ENCODE measurements at regions of chr2 and their contacts with region 1.

Region 1: GRCh38 chr2:241950413-241951315 is 81.1 kb downstream of the RTP5 start:
- H3K4me3 ChIP-seq: no peak overlapping the region
- H3K27ac ChIP-seq: no peak overlapping the region
- H3K4me1 ChIP-seq: no peaks in the 10 kb centered on the region
- CTCF ChIP-seq: peak; percentile 85

Region 2: DNA sequence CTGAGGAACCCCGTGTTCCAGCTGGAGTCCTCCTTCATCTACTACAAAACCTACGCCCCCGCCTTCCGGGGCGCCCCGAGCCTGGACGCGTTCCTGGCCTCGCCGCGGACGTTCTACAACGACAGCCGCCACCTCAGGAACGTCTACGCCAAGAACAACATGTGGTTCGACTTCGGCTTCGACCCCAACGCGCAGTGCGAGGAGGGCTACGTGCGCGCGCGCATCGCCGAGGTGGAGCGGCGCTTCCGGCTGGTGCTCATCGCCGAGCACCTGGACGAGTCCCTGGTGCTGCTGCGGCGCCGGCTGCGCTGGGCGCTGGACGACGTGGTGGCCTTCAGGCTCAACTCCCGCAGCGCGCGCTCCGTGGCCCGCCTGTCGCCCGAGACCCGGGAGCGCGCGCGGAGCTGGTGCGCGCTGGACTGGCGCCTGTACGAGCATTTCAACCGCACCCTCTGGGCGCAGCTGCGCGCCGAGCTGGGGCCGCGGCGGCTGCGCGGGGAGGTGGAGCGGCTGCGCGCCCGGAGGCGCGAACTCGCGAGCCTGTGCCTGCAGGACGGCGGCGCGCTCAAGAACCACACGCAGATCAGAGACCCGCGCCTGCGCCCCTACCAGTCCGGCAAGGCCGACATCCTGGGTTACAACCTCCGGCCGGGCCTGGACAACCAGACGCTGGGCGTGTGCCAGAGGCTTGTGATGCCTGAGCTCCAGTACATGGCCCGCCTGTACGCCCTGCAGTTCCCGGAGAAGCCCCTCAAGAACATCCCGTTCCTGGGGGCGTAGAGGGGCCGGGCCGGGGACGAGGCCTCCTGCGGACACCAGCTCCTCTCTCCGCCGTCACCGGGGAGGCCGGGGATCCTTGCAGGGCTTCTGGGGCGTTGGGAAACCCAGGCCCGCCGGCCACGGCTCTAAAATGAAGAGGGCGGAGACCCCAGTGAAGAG is 147.0 kb before region 1 on chr2:
- CTCF ChIA-PET with region 1: no interaction called
- POLR2A ChIA-PET with region 1: no interaction called
- H3K4me3 ChIP-seq: peak overlapping the region; percentile 6; the same call in 1 of the 2 replicates
- H3K27ac ChIP-seq: no peak overlapping the region
- H3K4me1 ChIP-seq: no peaks in the 10 kb centered on the region
- CTCF ChIP-seq: no peak

Region 3: GRCh38 chr2:241859436-241860183 is 91.1 kb before region 1 on chr2:
- CTCF ChIA-PET with region 1: no interaction called
- POLR2A ChIA-PET with region 1: no interaction called
- H3K4me3 ChIP-seq: no peak overlapping the region
- H3K27ac ChIP-seq: no peak overlapping the region
- H3K4me1 ChIP-seq: no peaks in the 10 kb centered on the region
- CTCF ChIP-seq: no peak

Region 4: GRCh38 chr2:241936457-241937133 is 14.1 kb before region 1 on chr2:
- CTCF ChIA-PET with region 1: interaction called, 19 read pairs
- POLR2A ChIA-PET with region 1: no interaction called
- H3K4me3 ChIP-seq: no peak overlapping the region
- H3K27ac ChIP-seq: no peak overlapping the region
- H3K4me1 ChIP-seq: peaks cover 6% of the 10 kb centered on the region
- CTCF ChIP-seq: no peak

Measured in HEK293 (cell line).